ENCODE measurements at regions of chr10 and their contacts with region 1.

Region 1: DNA sequence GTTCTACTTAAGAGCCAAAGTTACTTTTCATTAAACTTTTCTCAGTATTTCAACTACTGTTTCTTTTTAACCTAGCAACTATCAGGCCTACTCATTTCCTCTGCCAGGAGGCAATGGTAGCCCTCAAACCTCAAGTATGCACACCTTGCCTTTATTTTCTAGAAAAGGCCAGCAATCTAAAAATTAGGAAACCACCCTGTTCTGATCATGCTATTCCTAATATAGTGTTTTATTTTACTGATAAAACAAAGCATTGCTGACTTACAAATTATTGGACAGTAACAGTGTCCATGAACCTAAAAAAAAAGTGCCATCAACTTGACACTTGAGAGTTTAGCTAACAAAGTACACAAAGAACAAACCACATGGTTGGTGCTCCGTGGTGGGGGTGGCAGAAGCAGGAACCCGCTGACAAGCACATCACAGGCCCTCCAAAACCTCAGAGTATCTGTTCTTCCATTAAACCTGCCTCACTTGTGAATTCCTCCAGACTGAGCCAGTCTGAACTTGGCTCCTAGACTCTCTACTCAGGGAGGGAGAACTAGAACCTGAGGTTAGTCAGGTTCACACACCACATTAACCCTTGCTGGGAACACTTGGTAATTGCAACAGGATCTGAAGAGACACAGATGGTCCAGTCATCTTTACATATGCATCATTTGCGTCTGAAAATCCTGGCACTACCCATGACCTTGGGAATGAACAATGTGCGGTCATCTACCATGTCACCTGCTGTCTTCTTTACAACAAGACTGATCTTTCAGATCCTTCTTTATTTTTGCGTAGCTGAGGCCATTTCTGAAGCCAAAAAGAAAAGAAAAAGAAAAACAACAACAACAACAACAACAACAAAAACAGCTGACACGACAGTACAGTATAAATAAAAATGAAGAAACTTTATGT is 31.9 kb downstream of the PIP4K2A start:
- DNase-seq: peak; percentile 63
- H3K4me3 Mint-ChIP-seq: peak overlapping the region; percentile 76
- H3K27ac Mint-ChIP-seq: peak overlapping the region; percentile 99
- H3K4me1 Mint-ChIP-seq: peaks cover 87% of the 10 kb centered on the region
- H3K27me3 Mint-ChIP-seq: no peaks in the 10 kb centered on the region

Region 2: DNA sequence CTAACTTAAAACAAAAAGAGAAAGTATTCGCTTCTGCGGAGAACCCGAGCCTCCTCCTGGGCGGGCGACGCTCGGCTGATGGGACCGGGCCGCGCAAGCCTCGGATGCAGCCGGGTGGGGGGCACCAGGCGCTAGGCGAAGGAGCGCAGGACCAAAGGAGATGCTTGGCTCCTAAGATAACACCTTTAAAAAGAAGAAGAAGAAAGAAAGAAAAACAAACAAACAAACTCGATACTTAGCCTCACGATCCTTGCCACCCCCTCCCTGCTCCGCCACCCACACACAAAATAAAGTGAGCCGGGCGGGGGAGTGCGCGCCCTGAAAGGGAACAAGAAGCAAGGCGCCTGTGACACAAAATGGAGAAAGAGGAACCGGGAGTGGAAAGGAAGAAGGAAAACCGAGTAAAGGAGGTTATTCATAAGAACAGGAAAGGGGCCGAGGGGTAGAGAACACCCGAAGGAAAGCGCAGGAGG is 430.7 kb before region 1 on chr10:
- intact Hi-C with region 1: loop called (anchors 2 kb)
- DNase-seq: peak; percentile 58
- H3K4me3 Mint-ChIP-seq: peak overlapping the region; percentile 88
- H3K27ac Mint-ChIP-seq: peak overlapping the region; percentile 98
- H3K4me1 Mint-ChIP-seq: peaks cover 44% of the 10 kb centered on the region
- H3K27me3 Mint-ChIP-seq: peaks cover 18% of the 10 kb centered on the region

Region 3: GRCh38 chr10:22369434-22370072 is 312.9 kb before region 1 on chr10:
- intact Hi-C with region 1: loop called (anchors 10 kb)
- DNase-seq: no peak
- H3K4me3 Mint-ChIP-seq: no peak overlapping the region
- H3K27ac Mint-ChIP-seq: no peak overlapping the region
- H3K4me1 Mint-ChIP-seq: peaks cover 50% of the 10 kb centered on the region
- H3K27me3 Mint-ChIP-seq: no peaks in the 10 kb centered on the region

Region 4: DNA sequence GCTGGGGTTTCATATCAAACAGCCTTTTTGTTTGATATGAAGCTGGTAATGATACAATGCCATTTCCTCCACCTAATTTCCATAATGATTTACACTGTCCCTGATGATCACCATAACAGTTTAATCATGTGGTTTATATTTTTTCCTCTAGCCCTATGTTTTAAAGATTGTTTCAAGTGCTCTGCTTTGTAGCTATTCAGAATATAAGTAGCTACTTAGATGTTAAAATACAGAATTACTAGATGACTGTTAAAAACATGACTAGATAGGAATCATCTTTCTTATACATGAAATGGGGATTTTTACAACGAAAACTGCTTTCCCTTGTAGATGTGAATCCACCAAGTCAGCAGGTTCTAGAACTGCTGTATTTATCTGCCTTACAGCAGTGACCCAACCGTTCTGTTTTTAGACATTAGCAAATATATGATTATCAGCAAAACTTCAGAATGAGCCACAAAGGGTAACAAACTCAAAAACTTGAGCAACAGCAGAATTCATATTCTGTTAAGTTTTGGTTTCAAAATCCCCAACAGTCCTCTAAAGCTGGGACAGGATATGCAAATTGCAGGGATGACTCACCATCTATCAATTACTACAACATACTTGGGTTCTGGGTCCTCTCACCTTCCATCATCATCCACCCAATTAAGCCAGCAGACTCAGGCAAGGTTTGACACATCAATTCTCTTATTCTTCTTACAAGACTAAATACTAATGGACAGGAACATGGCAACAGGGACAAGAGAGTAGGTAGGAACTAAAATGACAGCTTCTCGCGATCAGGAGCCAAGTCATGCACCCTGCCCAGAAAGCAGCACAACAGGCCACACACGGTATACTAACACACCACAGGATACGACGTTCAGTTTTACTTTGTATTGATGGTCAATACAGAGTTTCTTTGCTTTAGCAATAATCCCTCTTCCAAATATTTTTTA is 52.0 kb before region 1 on chr10:
- intact Hi-C with region 1: loop called (anchors 1 kb)
- DNase-seq: no peak
- H3K4me3 Mint-ChIP-seq: peak overlapping the region; percentile 74
- H3K27ac Mint-ChIP-seq: peak overlapping the region; percentile 100
- H3K4me1 Mint-ChIP-seq: peaks cover 94% of the 10 kb centered on the region
- H3K27me3 Mint-ChIP-seq: no peaks in the 10 kb centered on the region

Region 5: DNA sequence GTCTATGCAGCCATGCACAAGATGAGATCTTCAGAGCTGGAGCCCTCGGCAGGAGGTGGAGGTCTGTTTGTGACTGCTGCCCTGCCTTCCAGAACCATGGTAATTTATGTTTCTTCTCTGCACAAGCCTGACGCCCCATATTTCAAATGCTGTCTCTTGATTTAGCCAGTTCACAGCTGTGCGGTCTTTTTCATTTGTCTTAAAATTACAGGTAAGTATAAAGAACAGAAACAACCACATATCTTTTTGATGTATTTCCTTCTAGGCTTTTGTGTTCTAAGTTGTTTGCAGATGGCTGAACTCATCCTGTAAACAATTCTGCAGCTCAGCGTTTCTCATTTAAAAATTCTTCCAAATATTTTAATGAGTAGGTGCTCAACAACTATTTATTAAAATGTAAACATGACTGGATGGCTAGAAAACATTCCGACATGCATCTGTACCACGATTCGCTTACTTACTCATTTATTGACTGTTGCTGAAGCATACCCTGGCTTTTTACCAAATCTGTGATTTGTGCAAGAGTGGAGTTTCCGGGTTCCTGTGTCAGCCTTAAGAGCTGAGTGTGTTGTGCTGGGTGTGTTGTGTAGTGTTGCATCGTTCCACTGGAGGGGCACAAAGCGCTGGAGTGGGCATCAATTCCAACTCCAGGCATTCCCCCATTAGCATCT is 27.0 kb before region 1 on chr10:
- intact Hi-C with region 1: loop called (anchors 1 kb)
- DNase-seq: no peak
- H3K4me3 Mint-ChIP-seq: peak overlapping the region; percentile 72
- H3K27ac Mint-ChIP-seq: peak overlapping the region; percentile 94
- H3K4me1 Mint-ChIP-seq: peaks cover 95% of the 10 kb centered on the region
- H3K27me3 Mint-ChIP-seq: no peaks in the 10 kb centered on the region

Region 6: DNA sequence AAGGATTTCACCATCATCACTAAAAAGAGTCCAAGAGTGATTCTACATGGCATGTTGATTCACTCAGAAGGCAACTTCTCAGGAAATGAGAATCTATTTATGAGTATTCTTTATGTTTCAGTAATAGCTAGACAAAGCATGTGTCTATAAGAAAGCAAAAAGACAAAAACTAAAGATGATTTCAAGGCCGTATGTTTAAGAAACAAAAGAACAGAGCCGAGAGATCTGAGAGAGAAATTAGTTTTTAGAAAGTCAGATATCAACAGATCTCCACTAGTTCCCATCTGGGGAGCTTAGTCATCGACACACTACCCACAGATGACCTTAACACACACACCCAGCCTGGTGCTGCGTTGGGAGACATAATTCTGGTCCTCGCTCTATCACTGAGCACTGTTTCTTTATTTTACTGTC is 10.9 kb after region 1 on chr10:
- intact Hi-C with region 1: loop called (anchors 1 kb)
- DNase-seq: no peak
- H3K4me3 Mint-ChIP-seq: peak overlapping the region; percentile 68
- H3K27ac Mint-ChIP-seq: peak overlapping the region; percentile 91
- H3K4me1 Mint-ChIP-seq: peaks cover 67% of the 10 kb centered on the region
- H3K27me3 Mint-ChIP-seq: no peaks in the 10 kb centered on the region